Posterior vena cava (tissue), 2 donors: ENCODE measurements at regions of chr12 and their contacts with region 1.

Region 1: GRCh38 chr12:20969766-20970165 is 159.3 kb downstream of the SLCO1B3 start:
- DNase-seq: no peak

Region 2: DNA sequence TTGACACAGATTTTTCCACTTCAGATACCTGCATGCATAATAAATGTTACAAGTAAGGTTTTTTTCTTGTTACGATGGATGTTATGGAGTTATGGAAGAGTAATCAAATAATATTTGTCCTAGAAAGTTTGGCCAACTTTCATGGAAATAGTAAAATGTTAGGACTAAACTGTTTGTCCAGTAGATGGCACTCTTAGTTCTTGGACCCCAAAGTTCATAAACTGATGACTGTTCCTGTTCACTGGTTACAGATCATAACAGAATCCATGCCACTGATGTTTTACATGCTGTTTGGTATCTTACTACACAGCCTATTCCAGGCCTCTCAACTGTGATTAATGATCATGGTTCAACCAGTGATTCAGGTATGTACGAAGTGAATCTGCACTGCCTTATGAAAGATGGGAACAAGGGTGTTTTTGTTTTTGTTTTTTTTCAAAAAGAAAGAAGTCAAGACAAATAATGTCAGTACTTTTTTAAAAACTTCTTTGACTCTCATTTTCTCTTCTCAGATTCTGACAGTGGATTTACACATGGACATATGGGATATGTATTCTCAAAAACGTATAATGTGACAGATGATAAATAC is 323.4 kb before region 1 on chr12:
- intact Hi-C with region 1: no loop called
- DNase-seq: no peak

Region 3: GRCh38 chr12:21370845-21371449 is 401.2 kb after region 1 on chr12:
- intact Hi-C with region 1: no loop called
- DNase-seq: no peak

Region 4: DNA sequence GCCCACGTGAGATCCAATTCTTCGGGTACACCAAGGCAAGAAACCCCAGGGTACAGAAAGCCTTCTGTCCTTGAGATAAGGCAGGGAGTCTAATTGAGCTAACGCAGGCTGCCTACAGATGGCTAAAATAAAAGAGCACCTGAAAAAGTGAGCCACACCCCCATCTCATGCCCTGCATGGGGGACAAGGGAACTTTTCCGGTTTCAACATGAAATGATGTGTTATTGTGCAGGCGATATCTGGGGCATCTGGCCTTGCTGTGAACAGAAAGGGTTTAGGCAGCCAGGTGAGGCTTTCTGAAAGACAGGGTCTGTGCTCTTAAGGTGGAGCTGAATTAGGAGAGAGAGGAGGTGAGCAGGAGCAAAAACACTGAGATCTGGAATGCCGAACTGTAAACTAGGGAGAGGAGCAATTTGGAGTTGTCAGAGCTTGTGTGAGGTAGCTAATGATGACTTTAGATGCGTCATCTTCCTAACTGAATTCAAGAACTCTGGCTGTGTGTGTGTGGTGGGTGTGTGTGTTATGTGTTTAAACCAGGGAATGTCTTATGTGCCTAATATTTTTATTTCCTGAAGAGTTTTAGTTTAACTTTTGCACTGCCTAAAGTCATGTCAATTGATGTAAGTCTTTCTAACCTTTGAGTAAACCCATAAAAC is 708.0 kb after region 1 on chr12:
- intact Hi-C with region 1: no loop called
- DNase-seq: no peak

Region 5: DNA sequence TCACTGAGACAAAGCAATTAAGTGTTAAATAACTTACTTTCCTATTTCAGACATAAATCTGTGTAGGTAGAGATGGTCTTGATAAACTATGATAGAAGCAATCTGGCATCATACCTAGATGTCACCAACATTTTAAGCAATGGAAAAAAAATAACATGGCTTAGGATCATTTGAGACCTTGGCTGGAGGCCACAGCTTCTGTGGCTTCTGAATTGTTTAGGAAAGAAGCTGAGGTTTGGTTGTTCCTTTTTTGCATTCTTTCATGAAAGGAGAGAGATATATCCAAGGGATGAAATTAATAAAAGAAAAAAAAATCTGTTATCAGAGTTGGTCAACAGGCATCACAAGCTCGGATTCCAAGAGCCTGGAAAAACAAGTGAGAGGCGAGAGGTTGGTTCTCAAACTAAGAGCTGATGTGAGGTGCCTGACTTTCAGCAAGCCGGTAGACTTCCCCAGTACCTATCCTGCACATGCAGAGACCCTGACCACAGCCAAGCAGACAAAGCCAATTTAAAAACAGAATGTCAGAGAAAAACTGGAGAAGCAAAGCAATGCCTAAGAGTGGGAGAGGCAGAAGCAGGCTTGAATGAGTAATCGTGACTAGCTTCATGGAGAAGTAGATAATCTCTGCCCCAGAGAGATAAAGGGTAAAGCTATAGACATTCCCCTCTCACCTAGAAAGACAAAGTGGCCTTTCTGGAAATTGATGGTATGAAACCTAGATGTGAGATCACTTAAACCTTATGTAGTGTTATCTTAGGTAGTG is 1408.1 kb after region 1 on chr12:
- intact Hi-C with region 1: loop called in 1 of 2 experiments (anchors 5 kb)
- DNase-seq: no peak